ENCODE measurements at regions of chr6 and their contacts with region 1.

Region 1: DNA sequence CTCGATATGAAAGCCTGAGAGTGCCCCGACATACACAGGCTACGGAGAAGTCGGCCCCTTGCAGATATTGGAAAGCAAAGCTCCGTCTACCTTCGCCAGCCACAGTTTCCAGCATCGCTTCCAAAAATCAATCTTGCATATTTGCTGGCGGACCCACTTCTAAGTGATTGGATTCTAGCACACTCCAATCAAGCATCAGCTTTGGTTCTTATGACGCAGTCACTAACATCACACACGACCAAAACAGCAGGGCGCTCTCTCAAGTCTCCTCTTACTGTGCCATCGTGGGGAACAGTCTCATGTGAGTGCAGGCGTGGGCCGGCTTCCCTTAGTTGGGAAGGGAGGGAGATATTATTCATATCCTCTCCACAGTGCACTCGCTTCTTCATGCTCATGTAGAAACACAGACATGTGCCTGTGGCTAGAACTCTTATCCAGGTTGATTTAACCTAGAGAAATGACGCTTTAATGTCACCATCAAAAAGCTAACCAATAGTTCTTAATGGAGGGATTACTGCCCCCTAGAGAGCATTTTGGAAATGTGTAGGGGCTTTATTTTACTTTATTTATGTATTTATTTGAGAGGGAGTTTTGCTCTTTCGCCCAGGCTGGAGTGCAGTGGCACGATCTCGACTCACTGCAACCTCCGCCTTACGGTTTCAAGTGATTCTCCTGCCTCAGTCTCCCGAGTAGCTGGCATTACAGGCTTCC is 229.8 kb downstream of the SOD2 start:
- DNase-seq: no peak
- ATAC-seq: no peak
- H3K4me3 ChIP-seq: no peak overlapping the region
- H3K27ac ChIP-seq: no peak overlapping the region
- H3K4me1 ChIP-seq: no peaks in the 10 kb centered on the region
- H3K27me3 ChIP-seq: no peaks in the 10 kb centered on the region

Region 2: DNA sequence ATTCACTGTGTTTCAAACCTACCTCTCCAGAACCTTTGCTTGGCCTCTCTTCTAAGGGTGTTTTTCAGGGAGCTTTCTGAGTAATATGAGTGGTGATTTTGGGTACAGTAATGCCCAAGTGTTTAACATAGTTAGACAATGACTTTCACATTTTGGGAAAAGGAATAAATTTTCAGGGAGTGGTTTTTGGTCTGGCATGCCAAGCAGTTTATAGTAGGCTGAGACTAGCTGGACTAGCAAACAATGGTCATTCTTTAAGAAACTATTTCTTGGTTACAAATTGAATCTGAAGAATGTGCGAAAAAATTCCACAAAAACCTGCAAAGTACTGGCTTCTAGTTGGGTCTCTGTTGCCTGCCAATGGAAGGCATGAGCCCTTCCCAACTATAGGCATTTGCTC is 278.7 kb before region 1 on chr6:
- intact Hi-C with region 1: loop called in 2 of 4 experiments (anchors 10 kb)
- DNase-seq: no peak
- ATAC-seq: no peak
- H3K4me3 ChIP-seq: no peak overlapping the region
- H3K27ac ChIP-seq: no peak overlapping the region
- H3K4me1 ChIP-seq: no peaks in the 10 kb centered on the region
- H3K27me3 ChIP-seq: no peaks in the 10 kb centered on the region

Measured in right cardiac atrium (tissue), 5 donors.